Left ventricle myocardium superior (tissue), 1 donor: ENCODE measurements at regions of chr9 and their contacts with region 1.

Region 1: GRCh38 chr9:80775530-80775929 is 913.8 kb downstream of the TLE1 start:
- DNase-seq: no peak
- ATAC-seq: no peak

Region 2: DNA sequence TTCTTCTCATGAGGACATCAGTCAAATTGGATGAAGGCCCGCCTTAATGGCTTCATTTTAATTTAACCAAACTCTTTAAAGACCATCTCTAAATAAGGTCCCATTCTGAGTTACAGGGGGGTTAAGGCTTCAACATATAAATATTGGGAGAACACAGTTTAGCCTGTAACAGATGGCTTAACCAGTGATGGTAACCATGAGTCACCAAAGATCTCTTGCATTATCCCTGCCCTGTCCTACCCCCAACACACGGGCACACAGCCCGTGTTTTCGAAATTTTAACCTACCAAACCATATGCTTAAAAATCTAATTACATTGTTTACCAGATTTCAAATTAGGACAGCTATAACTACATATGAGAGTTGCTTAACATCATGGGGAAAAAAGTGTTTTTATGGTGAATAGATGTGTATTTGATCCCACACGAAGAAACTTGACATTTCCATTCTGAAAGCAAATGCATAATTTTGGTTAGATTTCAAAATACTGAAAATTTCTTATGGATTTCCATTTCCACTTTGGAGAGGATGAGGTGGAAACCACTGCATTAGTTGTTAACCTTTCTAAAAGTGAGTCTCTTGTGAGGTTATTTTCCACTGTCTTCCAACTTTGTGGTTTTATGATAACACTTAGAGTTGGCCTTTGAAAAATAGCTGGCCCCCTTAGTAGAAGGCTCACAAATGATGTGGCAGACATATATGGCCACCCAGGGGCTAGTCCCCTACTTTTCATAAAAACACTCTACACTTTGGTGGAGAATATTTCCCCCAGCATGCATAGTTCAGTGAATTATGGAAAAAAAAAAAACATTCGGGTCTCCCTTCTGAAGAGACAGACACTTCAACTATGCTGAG is 64.5 kb after region 1 on chr9:
- intact Hi-C with region 1: loop called (anchors 10 kb)
- DNase-seq: no peak
- ATAC-seq: no peak

Region 3: GRCh38 chr9:80926611-80927010 is 151.1 kb after region 1 on chr9:
- intact Hi-C with region 1: no loop called
- DNase-seq: no peak
- ATAC-seq: no peak